IMR-90 (cell line): ENCODE measurements at regions of chr1 and their contacts with region 1.

Region 1: DNA sequence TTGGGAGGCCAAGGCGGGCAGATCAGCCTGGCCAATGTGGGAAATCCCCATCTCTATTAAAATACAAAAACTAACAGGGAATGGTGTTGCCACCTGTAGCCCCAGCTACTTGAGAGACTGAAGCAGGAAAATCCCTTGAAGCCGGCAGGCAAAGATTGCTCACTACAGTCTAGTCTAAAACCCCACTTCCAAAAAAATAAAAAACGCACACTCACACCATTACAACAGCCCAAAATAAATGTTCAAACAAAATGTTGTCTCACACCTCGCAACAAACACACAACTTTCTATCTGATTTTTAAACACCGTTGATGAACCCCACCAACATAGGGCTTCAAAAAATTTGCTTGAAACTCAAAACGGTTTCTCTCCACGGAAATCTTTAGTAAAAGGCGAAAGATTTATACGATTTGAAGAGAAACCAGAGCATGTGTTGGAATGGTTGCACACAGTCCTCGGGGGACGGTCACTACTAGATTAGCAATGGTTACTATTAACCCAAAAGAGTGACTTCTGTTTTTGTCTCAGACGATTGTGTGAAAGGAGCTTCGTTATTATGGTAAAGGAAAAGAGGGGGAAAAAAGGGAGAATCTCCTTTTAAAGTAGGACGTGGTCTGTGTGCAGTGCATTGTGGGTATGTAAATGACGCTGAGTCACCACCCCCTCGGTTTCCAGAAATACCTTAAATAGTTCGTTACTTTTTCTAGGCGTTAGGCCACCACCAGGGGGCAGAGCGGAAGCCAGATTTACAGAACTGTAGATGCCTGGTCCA is at the start of gene RNU5D-1:
- DNase-seq: peak; percentile 98
- ATAC-seq: peak; percentile 84
- H3K4me3 ChIP-seq: peak within 1 kb of the TSS; percentile 9; the same call in 1 of the 2 replicates
- H3K27ac ChIP-seq: peak within 1 kb of the TSS; percentile 62
- H3K4me1 ChIP-seq: peaks cover 2% of the 10 kb centered on the region; the same call in 1 of the 2 replicates
- H3K27me3 ChIP-seq: no peaks in the 10 kb centered on the region
- CTCF ChIP-seq: peak; percentile 89
- POLR2A ChIP-seq: peak; percentile 99
- RAD21 ChIP-seq: peak; percentile 58
- total RNA-seq, gene RNU5D-1: not detected in 2 replicates

Region 2: GRCh38 chr1:44314452-44314851 is 416.5 kb before region 1 on chr1:
- CTCF ChIA-PET with region 1: no interaction called
- POLR2A ChIA-PET with region 1: no interaction called
- dilution Hi-C with region 1: no loop called
- in situ Hi-C with region 1: no loop called
- intact Hi-C with region 1: no loop called
- DNase-seq: no peak
- ATAC-seq: no peak
- H3K4me3 ChIP-seq: no peak overlapping the region
- H3K27ac ChIP-seq: no peak overlapping the region
- H3K4me1 ChIP-seq: no peaks in the 10 kb centered on the region
- H3K27me3 ChIP-seq: no peaks in the 10 kb centered on the region
- CTCF ChIP-seq: 0 out of 2 replicates have a peak, but pooled peaks have one; percentile 11
- POLR2A ChIP-seq: no peak
- RAD21 ChIP-seq: no peak

Region 3: DNA sequence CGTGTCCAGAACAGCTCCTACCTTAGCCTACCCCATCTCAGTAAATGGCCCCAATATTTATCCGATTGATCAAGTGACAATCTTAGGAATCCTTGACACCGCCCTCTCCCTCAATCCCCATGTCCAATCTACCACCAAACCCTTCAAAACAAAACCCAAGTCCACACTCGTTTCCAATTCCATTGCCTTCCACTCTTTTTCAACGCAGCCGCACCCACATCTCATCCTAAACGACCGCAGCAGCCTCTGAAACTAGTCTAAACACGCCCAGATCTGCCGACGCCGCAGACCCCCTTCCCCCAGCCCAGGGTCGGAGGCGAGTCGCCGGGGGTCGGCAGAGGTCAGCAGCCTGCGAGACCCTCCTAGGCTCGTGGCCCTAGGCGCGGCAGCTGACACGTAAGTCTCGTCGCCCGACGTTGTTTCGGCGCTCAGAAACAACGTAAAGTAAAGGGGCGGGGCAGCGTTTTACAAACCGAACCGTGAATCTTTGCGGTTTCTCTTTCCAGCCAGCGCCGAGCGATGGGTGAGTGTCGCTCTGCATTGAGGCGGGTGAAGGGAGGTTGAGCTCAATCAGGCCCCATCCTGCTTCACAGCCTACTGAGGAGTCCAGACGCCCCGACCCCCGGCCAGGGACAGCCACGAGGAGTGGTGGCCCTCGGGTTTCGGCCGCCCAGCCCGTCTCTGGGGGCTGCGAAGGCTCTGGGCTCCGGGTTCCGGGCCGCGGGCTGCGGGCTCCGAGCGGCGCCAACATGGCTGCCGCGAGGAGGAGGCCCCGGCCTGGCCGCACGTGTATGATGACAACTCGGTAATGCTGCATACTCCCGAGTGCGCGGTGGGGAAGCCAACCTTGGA is 44.4 kb after region 1 on chr1 and contains the start of gene RPS8:
- CTCF ChIA-PET with region 1: no interaction called
- POLR2A ChIA-PET with region 1: interaction called, 4 read pairs
- dilution Hi-C with region 1: no loop called
- in situ Hi-C with region 1: no loop called
- intact Hi-C with region 1: loop called (anchors 2 kb)
- DNase-seq: peak; percentile 93
- ATAC-seq: peak; percentile 87
- H3K4me3 ChIP-seq: peak within 1 kb of the TSS; percentile 78
- H3K27ac ChIP-seq: peak within 1 kb of the TSS; percentile 91
- H3K4me1 ChIP-seq: peaks cover 12% of the 10 kb centered on the region
- H3K27me3 ChIP-seq: no peaks in the 10 kb centered on the region
- CTCF ChIP-seq: no peak
- POLR2A ChIP-seq: peak; percentile 99
- RAD21 ChIP-seq: no peak
- total RNA-seq, gene RPS8: 1,837 and 2,171 TPM in 2 replicates

Region 4: GRCh38 chr1:44807262-44808062 is 76.5 kb after region 1 on chr1 and contains the start of gene DYNLT4:
- CTCF ChIA-PET with region 1: no interaction called
- POLR2A ChIA-PET with region 1: interaction called, 4 read pairs
- dilution Hi-C with region 1: no loop called
- in situ Hi-C with region 1: no loop called
- intact Hi-C with region 1: loop called (anchors 5 kb)
- DNase-seq: peak; percentile 99
- ATAC-seq: peak; percentile 73
- H3K4me3 ChIP-seq: no peak within 1 kb of the TSS
- H3K27ac ChIP-seq: peak within 1 kb of the TSS; percentile 86
- H3K4me1 ChIP-seq: peaks cover 51% of the 10 kb centered on the region
- H3K27me3 ChIP-seq: no peaks in the 10 kb centered on the region
- CTCF ChIP-seq: no peak
- POLR2A ChIP-seq: peak; percentile 78
- RAD21 ChIP-seq: no peak
- total RNA-seq, gene DYNLT4: 0.56 TPM in 1 of 2 replicates, not detected in the other

Region 5: GRCh38 chr1:44903011-44903680 is 172.2 kb after region 1 on chr1:
- CTCF ChIA-PET with region 1: interaction called, 10 read pairs
- POLR2A ChIA-PET with region 1: no interaction called
- dilution Hi-C with region 1: no loop called
- in situ Hi-C with region 1: no loop called
- intact Hi-C with region 1: no loop called
- DNase-seq: peak; percentile 42
- ATAC-seq: peak; percentile 64
- H3K4me3 ChIP-seq: no peak overlapping the region
- H3K27ac ChIP-seq: no peak overlapping the region
- H3K4me1 ChIP-seq: peaks cover 5% of the 10 kb centered on the region
- H3K27me3 ChIP-seq: no peaks in the 10 kb centered on the region
- CTCF ChIP-seq: no peak
- POLR2A ChIP-seq: no peak
- RAD21 ChIP-seq: no peak

Region 6: GRCh38 chr1:45103534-45103933 is 372.6 kb after region 1 on chr1:
- CTCF ChIA-PET with region 1: no interaction called
- POLR2A ChIA-PET with region 1: no interaction called
- dilution Hi-C with region 1: no loop called
- in situ Hi-C with region 1: no loop called
- intact Hi-C with region 1: no loop called
- DNase-seq: no peak
- ATAC-seq: no peak
- H3K4me3 ChIP-seq: no peak overlapping the region
- H3K27ac ChIP-seq: no peak overlapping the region
- H3K4me1 ChIP-seq: no peaks in the 10 kb centered on the region
- H3K27me3 ChIP-seq: no peaks in the 10 kb centered on the region; the same call in 1 of the 2 replicates
- CTCF ChIP-seq: no peak
- POLR2A ChIP-seq: no peak
- RAD21 ChIP-seq: no peak